Activated T-helper 1 cell treated with anti-CD3 and anti-CD28 coated beads, Interleukin-12 subunit alpha, Interleukin-12 subunit beta, Interleukin-2, Interleukin-4 antibody, amounts not matched to agents 30 ng/mL and 10 ng/mL and 1 ng/mL, durations not matched to agents 14 hours and 24 hours and 36 hours (primary cell): ENCODE measurements at regions of chr6 and their contacts with region 1.

Region 1: GRCh38 chr6:32539839-32540238 is 9.8 kb upstream of the HLA-DRB5 start:
- DNase-seq: no peak
- H3K4me3 Mint-ChIP-seq: no peak overlapping the region
- H3K27ac Mint-ChIP-seq: no peak overlapping the region
- H3K4me1 Mint-ChIP-seq: no peaks in the 10 kb centered on the region
- H3K27me3 Mint-ChIP-seq: peaks cover 19% of the 10 kb centered on the region

Region 2: GRCh38 chr6:32483968-32484636 is 55.7 kb before region 1 on chr6:
- intact Hi-C with region 1: loop called (anchors 1 kb)
- DNase-seq: no peak
- H3K4me3 Mint-ChIP-seq: no peak overlapping the region
- H3K27ac Mint-ChIP-seq: no peak overlapping the region
- H3K4me1 Mint-ChIP-seq: no peaks in the 10 kb centered on the region
- H3K27me3 Mint-ChIP-seq: peaks cover 28% of the 10 kb centered on the region

Region 3: DNA sequence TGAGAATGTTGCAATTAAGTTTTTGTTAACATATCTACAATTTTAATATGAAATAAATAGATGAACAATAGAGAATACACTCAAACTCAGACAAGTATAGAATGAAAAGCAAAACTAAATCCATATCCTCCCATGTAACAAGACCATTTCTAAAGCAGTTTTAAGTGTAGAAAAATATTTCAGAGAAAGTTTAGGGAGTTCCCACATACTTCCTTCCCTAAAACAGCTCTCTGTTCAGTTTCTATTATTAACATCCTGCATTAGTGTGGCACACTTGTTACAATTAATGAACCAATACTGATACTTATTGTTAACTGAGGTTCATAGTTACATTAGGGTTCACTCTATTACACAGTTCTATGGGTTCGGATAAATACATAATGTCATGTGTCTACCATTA is 48.1 kb before region 1 on chr6:
- intact Hi-C with region 1: loop called (anchors 1 kb)
- DNase-seq: no peak
- H3K4me3 Mint-ChIP-seq: no peak overlapping the region
- H3K27ac Mint-ChIP-seq: no peak overlapping the region
- H3K4me1 Mint-ChIP-seq: no peaks in the 10 kb centered on the region
- H3K27me3 Mint-ChIP-seq: peaks cover 25% of the 10 kb centered on the region

Region 4: GRCh38 chr6:32501016-32501415 is 38.8 kb before region 1 on chr6:
- intact Hi-C with region 1: loop called (anchors 1 kb)
- DNase-seq: no peak
- H3K4me3 Mint-ChIP-seq: no peak overlapping the region
- H3K27ac Mint-ChIP-seq: no peak overlapping the region
- H3K4me1 Mint-ChIP-seq: peaks cover 5% of the 10 kb centered on the region
- H3K27me3 Mint-ChIP-seq: peaks cover 20% of the 10 kb centered on the region

Region 5: DNA sequence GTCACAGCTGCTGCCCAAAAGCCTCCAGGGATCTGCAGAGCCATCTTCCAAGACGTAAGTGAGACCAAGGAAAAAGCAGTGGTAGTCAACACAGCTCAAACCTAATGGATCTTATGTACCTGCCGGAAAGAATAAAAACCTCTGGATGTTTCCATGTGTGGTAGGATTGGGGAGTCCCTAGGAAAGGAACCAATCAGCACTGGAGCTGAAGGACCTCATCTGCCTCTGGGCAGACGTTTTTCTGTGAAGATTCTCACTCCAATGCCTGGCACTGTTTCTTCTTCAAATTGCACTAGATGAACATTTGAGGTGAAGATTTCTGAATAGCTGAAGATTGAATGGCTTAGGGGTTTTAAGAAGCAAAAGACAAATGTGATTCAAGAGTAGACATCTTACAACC is 223.6 kb after region 1 on chr6 and contains the start of gene HLA-DQB2:
- intact Hi-C with region 1: no loop called
- DNase-seq: no peak
- H3K4me3 Mint-ChIP-seq: no peak within 1 kb of the TSS
- H3K27ac Mint-ChIP-seq: no peak within 1 kb of the TSS
- H3K4me1 Mint-ChIP-seq: no peaks in the 10 kb centered on the region
- H3K27me3 Mint-ChIP-seq: peaks cover 16% of the 10 kb centered on the region
- total RNA-seq, gene HLA-DQB2: 0.51 and 0.67 TPM in 2 replicates

Region 6: DNA sequence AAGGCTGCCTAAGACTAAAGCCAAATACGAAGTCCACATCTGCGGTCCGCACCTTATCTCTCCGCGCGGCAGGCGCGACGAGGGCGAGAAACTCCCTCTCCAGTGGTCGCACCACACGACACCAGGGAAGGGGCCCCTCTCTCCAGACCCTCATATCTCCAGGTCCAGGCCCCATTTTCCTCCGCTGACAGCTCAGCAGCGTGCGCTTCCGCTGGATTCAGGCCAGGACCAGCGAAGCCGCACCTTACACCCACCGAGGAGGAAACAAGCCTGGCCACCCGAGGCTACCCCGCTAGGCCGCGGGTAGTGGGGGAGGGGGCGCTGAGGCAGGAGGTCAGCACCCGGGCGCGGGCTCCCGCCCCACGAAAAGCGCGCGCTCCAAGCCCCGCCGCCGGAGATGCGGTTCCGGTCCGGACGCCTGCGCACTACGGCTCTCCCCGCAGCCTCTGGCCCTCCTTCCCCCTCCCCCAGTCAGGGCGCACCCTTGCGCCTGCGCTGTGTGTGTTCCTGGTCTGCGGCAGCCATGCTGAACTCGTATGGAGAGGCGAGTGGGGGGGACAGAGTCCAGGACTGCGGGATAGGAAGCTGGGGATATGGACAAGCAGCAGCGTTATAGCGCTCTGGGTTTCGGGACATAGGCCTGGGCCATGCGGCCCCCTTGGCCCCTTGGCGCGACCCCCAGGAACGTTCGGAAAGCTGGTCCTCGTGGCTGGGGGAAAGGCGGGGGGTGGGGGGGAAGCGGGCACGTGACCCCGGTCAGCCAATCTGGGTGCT is 428.4 kb after region 1 on chr6 and contains the start of gene BRD2:
- intact Hi-C with region 1: no loop called
- DNase-seq: peak; percentile 97
- H3K4me3 Mint-ChIP-seq: peak within 1 kb of the TSS; percentile 96
- H3K27ac Mint-ChIP-seq: peak within 1 kb of the TSS; percentile 99
- H3K4me1 Mint-ChIP-seq: peaks cover 28% of the 10 kb centered on the region
- H3K27me3 Mint-ChIP-seq: peaks cover 4% of the 10 kb centered on the region
- total RNA-seq, gene BRD2: 316 and 330 TPM in 2 replicates